GM18951 (cell line): ENCODE measurements at regions of chr16 and their contacts with region 1.

Region 1: GRCh38 chr16:2919511-2920255 is 8.0 kb downstream of the FLYWCH1 start:
- POLR2A ChIP-seq: no peak

Region 2: DNA sequence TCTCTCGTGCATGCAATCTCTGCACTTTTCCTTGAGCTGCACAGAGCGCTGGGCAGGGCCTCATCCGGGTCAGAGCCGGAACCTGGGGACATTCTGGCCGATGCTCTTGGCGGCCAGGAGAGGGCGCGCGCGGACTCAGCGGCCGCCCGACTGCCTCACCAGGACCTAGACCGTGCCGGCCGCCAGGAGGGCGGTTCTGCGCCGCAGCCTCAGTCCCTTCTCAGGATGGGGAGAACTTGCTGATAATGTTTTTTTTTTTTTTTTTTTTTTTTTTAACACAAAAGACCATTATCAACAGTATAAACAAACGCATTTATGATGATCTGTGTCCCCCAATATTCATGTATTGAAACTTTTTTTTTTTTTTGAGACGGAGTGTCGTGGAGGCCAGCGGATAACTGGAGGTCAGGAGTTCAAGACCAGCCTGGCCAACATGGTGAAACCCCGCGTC is 44.7 kb before region 1 on chr16:
- in situ Hi-C with region 1: loop called (anchors 5 kb)
- POLR2A ChIP-seq: no peak